ENCODE measurements at regions of chr19 and their contacts with region 1.

Region 1: GRCh38 chr19:39846176-39846677 is at the start of gene FBL:
- DNase-seq: peak; percentile 57 to 98
- H3K4me3 ChIP-seq: peak within 1 kb of the TSS; percentile 91 to 99 (median 96)
- H3K27ac ChIP-seq: peak within 1 kb of the TSS; percentile 65
- H3K4me1 ChIP-seq: peaks cover 7 to 28% (median 18%) of the 10 kb centered on the region in 4 experiments
- H3K27me3 ChIP-seq: no peaks in the 10 kb centered on the region
- CTCF ChIP-seq: no peak
- EP300 ChIP-seq: no peak
- POLR2A ChIP-seq: peak in 1 of 2 experiments; percentile 34; a peak in 1 of 3 replicates
- RAD21 ChIP-seq: no peak
- total RNA-seq, gene FBL: 790 and 809 TPM in 2 replicates

Region 2: GRCh38 chr19:39671738-39672363 is 174.4 kb before region 1 on chr19:
- CTCF ChIA-PET with region 1: interaction called, 41 read pairs
- POLR2A ChIA-PET with region 1: no interaction called
- DNase-seq: peak; percentile 15 to 50
- H3K4me3 ChIP-seq: no peak overlapping the region
- H3K27ac ChIP-seq: no peak overlapping the region
- H3K4me1 ChIP-seq: peaks cover 0 to 8% (median 2%) of the 10 kb centered on the region in 4 experiments; a peak in 2 of 7 replicates
- H3K27me3 ChIP-seq: no peaks in the 10 kb centered on the region
- CTCF ChIP-seq: peak in 2 of 3 experiments; percentile 74 to 88; a peak in 3 of 4 replicates
- EP300 ChIP-seq: no peak
- POLR2A ChIP-seq: no peak
- RAD21 ChIP-seq: peak; percentile 95 to 97

Region 3: GRCh38 chr19:39792999-39793546 is 53.2 kb before region 1 on chr19:
- CTCF ChIA-PET with region 1: interaction called, 43 read pairs
- POLR2A ChIA-PET with region 1: interaction called, 10 read pairs
- DNase-seq: peak; percentile 25 to 92
- H3K4me3 ChIP-seq: peak overlapping the region; percentile 14 to 83 (median 72); a peak in 7 of 8 replicates
- H3K27ac ChIP-seq: no peak overlapping the region
- H3K4me1 ChIP-seq: peaks cover 2 to 10% (median 5%) of the 10 kb centered on the region in 4 experiments; a peak in 4 of 7 replicates
- H3K27me3 ChIP-seq: no peaks in the 10 kb centered on the region
- CTCF ChIP-seq: peak; percentile 79 to 90 (median 89)
- EP300 ChIP-seq: no peak
- POLR2A ChIP-seq: no peak
- RAD21 ChIP-seq: peak; percentile 81 to 89

Region 4: GRCh38 chr19:39810424-39810823 is 35.8 kb before region 1 on chr19:
- CTCF ChIA-PET with region 1: interaction called, 13 read pairs
- POLR2A ChIA-PET with region 1: no interaction called
- DNase-seq: no peak
- H3K4me3 ChIP-seq: no peak overlapping the region
- H3K27ac ChIP-seq: no peak overlapping the region
- H3K4me1 ChIP-seq: no peaks in the 10 kb centered on the region
- H3K27me3 ChIP-seq: no peaks in the 10 kb centered on the region
- CTCF ChIP-seq: no peak
- EP300 ChIP-seq: no peak
- POLR2A ChIP-seq: no peak
- RAD21 ChIP-seq: no peak

Region 5: DNA sequence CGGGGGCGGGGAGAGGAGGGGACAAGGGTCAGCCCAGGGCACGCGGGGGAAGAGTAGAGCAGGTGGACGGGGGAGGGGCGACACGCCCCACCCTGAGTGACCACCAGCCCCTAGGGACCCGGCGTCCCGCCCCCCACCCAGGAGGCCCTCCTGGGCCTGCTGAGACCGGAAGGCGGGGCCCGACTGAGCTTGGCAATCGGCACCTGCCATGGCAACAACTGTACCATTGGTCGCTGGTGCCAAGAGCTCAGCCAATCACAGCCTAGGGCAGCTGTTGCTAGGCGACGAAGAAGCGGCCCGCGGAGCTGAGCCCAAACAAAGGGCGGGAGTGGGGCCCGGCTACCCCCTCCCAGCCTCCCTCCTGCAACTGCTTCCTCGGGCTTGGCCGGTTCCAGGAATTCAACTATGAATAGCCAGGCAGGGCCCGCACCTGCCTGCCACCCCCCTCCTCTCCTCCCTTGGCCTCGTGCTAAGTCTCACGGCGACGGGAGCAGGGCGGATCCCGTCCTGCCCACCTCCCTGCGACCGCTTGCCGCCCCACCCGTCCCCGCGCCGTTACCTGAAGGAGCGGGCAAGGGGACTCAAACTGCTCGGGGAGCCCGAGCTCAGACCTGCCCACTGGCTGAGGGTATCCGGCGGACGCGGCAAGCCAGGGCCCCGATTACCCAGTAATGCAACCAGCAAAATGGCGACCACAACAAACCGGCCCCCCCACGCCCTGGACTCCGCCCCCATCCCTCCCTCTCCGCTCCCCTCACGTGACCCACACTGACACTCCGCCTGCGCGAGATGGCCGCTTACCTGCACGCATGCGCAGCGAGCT is 12.6 kb before region 1 on chr19 and contains the start of gene DYRK1B:
- CTCF ChIA-PET with region 1: interaction called, 22 read pairs
- POLR2A ChIA-PET with region 1: interaction called, 31 read pairs
- DNase-seq: peak; percentile 89 to 95
- H3K4me3 ChIP-seq: peak within 1 kb of the TSS; percentile 69 to 83 (median 77)
- H3K27ac ChIP-seq: peak within 1 kb of the TSS; percentile 84
- H3K4me1 ChIP-seq: peaks cover 0 to 10% (median 4%) of the 10 kb centered on the region in 4 experiments; a peak in 5 of 7 replicates
- H3K27me3 ChIP-seq: no peaks in the 10 kb centered on the region
- CTCF ChIP-seq: no peak
- EP300 ChIP-seq: 0 out of 3 replicates have a peak, but pooled peaks of 1 of the 2 experiments have one; percentile 2
- POLR2A ChIP-seq: peak in 1 of 2 experiments; percentile 76; a peak in 1 of 3 replicates
- RAD21 ChIP-seq: no peak
- total RNA-seq, gene DYRK1B: 14.8 and 15.8 TPM in 2 replicates

Region 6: DNA sequence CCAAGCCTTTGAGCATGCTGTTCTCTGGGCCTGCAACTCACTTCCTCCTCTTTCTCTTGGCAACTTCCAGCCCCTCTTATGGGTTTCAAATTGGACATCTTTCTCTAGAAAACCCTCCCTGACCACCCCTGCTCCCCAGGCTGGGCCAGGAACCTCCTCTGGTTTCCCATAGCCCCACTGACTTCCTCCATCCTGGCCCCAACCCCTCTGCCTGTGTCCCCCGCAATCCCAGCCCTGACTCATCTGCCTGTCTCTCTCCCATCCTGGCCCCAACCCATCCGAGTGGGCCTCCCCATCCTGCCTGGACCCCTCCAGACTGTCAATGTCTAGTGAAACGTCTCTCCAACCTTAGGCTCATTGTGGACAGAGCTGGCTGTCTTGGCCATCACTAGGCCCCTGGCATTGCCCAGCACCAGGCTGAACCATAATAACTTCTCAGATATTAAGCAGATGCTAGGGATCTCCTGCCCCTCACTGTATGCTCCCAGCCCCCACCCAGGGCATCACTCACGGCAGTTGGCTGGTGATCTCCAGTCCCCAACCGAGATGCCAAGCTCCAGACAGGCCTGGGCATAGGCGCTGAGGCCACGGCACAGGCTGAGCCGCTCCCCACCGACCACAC is 71.4 kb after region 1 on chr19:
- CTCF ChIA-PET with region 1: no interaction called
- POLR2A ChIA-PET with region 1: no interaction called
- DNase-seq: no peak
- H3K4me3 ChIP-seq: no peak overlapping the region
- H3K27ac ChIP-seq: no peak overlapping the region
- H3K4me1 ChIP-seq: no peaks in the 10 kb centered on the region
- H3K27me3 ChIP-seq: no peaks in the 10 kb centered on the region
- CTCF ChIP-seq: no peak
- EP300 ChIP-seq: no peak
- POLR2A ChIP-seq: no peak
- RAD21 ChIP-seq: no peak